Panc1 (cell line): ENCODE measurements at regions of chr15 and their contacts with region 1.

Region 1: GRCh38 chr15:40746916-40747514 is 8.0 kb downstream of the RMDN3 start:
- DNase-seq: no peak
- ATAC-seq: peak; percentile 14; the same call in 1 of the 2 replicates
- H3K4me3 ChIP-seq: no peak overlapping the region
- H3K27ac ChIP-seq: no peak overlapping the region
- H3K4me1 ChIP-seq: no peaks in the 10 kb centered on the region
- H3K27me3 ChIP-seq: no peaks in the 10 kb centered on the region
- CTCF ChIP-seq: no peak

Region 2: GRCh38 chr15:40893733-40894688 is 147.0 kb after region 1 on chr15 and contains the start of gene VPS18:
- CTCF ChIA-PET with region 1: interaction called, 12 read pairs
- POLR2A ChIA-PET with region 1: interaction called, 3 read pairs
- in situ Hi-C with region 1: no loop called
- intact Hi-C with region 1: no loop called
- DNase-seq: peak; percentile 82
- ATAC-seq: peak; percentile 97
- H3K4me3 ChIP-seq: peak within 1 kb of the TSS; percentile 94 to 97
- H3K27ac ChIP-seq: peak within 1 kb of the TSS; percentile 90
- H3K4me1 ChIP-seq: peaks cover 9% of the 10 kb centered on the region
- H3K27me3 ChIP-seq: no peaks in the 10 kb centered on the region
- CTCF ChIP-seq: peak; percentile 97
- total RNA-seq, gene VPS18: 46.7 TPM